SK-N-SH (cell line): ENCODE measurements at regions of chr6 and their contacts with region 1.

Region 1: DNA sequence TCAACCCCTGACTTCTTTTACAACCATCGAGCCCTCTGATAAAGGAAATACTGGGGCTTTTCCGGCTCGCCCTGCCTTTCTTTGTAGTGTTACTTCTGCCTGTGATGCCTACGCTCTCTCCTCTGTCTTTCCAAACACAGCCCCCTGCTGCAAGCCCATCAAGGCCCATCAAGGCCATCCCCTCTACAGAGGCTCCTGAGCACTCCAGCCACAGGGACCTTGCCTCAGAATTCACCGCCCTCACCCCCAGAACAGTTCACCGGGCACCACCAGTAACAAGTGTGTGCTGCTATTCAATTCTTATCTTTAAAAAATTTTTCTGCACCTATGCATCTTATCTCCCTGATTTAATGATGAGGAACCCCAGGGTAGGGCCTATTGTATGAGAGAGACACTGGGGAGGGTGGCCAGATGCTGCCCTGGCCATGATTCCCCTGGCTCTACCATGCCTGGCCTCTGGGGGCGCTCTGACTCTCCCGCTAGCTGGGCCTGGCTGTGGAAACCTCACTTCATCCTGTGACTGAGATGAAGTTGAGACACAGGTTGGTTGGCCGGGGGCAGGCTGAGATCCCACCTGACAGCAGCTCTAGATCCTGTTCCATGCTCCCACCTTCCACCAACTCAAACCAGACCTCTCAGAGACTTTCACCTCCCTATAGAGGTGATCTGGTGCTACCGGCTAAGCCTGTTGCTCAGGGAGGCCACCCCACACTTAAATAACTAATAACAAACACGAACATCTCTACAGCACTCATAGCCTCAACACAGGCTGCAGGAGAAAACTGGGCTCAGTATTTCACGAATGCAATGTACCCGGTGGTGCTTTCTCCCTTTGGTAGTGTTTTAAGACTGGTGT is 19.2 kb upstream of the GLP1R start:
- DNase-seq: peak; percentile 69
- H3K4me3 ChIP-seq: no peak overlapping the region; a peak in 1 of 4 replicates
- H3K27ac ChIP-seq: no peak overlapping the region
- H3K4me1 ChIP-seq: no peaks in the 10 kb centered on the region
- H3K27me3 ChIP-seq: no peaks in the 10 kb centered on the region
- CTCF ChIP-seq: peak; percentile 75
- EP300 ChIP-seq: no peak
- RAD21 ChIP-seq: peak; percentile 60

Region 2: DNA sequence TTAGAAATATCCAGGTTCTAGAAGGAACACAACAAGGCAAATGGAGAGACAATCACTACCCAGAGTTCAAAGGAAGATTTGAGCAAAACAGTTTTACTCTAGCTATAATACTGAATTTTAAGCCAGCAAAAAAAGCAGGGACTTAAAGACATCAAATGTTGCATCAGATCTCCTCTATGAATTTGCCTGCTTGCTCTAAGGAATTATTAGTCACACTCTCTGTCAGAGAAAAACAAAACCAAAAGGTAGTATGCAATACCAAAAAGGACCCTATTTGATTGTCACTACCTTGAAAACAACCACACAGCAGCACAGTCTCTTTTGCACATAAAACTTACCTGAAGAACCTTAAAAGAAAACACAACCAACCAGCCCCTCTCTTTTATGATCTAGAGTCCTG is 436.0 kb before region 1 on chr6:
- CTCF ChIA-PET with region 1: no interaction called
- POLR2A ChIA-PET with region 1: no interaction called
- DNase-seq: no peak
- H3K4me3 ChIP-seq: no peak overlapping the region
- H3K27ac ChIP-seq: no peak overlapping the region
- H3K4me1 ChIP-seq: no peaks in the 10 kb centered on the region; a peak in 1 of 4 replicates
- H3K27me3 ChIP-seq: no peaks in the 10 kb centered on the region
- CTCF ChIP-seq: no peak
- EP300 ChIP-seq: no peak
- RAD21 ChIP-seq: no peak

Region 3: DNA sequence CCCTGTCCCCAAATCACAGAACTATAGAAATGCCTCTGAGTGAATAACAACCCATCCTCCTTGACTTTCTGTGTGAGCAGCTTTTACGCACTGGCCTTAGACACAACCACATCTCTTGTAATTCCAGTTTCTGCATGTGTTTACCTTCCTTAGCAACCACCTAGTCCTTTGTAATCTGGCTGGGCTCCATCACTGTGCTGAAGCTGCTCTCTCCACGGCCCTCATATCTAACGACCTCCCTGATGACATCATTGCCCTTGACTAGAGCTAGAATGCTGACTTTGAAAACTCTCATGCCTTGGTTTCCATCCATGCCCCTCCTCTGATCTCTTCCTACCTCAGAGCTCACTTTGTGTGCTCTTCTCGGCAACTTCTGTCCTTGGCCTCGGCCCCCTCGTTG is 11.3 kb before region 1 on chr6:
- CTCF ChIA-PET with region 1: interaction called, 19 read pairs
- POLR2A ChIA-PET with region 1: no interaction called
- DNase-seq: no peak
- H3K4me3 ChIP-seq: no peak overlapping the region
- H3K27ac ChIP-seq: no peak overlapping the region
- H3K4me1 ChIP-seq: no peaks in the 10 kb centered on the region
- H3K27me3 ChIP-seq: no peaks in the 10 kb centered on the region
- CTCF ChIP-seq: no peak
- EP300 ChIP-seq: no peak
- RAD21 ChIP-seq: no peak

Region 4: GRCh38 chr6:39041072-39041471 is 11.7 kb after region 1 on chr6:
- CTCF ChIA-PET with region 1: interaction called, 13 read pairs
- POLR2A ChIA-PET with region 1: no interaction called
- DNase-seq: no peak
- H3K4me3 ChIP-seq: no peak overlapping the region
- H3K27ac ChIP-seq: no peak overlapping the region
- H3K4me1 ChIP-seq: peaks cover 0 to 4% of the 10 kb centered on the region in 2 experiments; a peak in 1 of 4 replicates
- H3K27me3 ChIP-seq: no peaks in the 10 kb centered on the region; the same call in 1 of the 2 replicates
- CTCF ChIP-seq: no peak
- EP300 ChIP-seq: no peak
- RAD21 ChIP-seq: no peak

Region 5: DNA sequence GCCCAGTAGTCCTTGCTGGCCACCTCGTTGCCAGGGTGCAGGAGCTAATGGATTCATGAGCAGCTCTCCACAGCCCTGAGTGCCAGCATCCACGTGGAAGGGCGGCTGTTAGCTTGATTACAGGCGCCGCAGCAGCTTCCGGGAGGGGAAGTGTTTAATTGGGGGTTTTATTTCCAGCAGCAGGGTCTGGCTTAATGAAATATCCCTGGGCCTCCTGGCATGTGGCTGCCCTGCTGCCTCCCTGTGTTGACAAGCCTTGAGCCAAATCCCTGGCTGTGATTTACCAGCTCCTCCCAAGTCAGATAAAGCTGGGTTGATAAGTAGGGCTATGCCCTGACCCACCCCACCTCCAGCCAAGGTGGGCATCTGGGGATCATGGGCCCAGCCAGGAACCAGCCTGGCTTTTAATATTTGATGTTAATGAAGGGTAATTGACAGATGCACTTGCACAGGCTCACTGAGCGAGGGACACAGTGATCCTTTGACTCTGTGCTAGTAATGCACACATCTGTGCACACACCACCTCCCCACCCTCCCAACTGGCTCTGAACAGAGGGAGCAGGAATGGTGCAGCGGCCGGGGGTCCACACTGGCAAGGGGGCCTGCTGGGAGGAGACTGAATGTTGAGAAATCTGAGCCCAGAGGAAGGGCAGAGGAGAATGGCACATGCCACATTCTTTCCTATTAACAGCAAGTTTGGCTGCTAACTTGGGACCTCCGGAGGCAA is 32.8 kb after region 1 on chr6:
- CTCF ChIA-PET with region 1: interaction called, 10 read pairs
- POLR2A ChIA-PET with region 1: no interaction called
- DNase-seq: peak; percentile 80
- H3K4me3 ChIP-seq: no peak overlapping the region
- H3K27ac ChIP-seq: peak overlapping the region in 1 of 2 experiments; percentile 44; a peak in 2 of 4 replicates
- H3K4me1 ChIP-seq: peaks cover 0 to 57% of the 10 kb centered on the region in 2 experiments; a peak in 2 of 4 replicates
- H3K27me3 ChIP-seq: no peaks in the 10 kb centered on the region
- CTCF ChIP-seq: no peak
- EP300 ChIP-seq: peak in 1 of 2 experiments; percentile 87; a peak in 2 of 4 replicates
- RAD21 ChIP-seq: peak; percentile 29